ENCODE measurements at regions of chr17 and their contacts with region 1.

Region 1: DNA sequence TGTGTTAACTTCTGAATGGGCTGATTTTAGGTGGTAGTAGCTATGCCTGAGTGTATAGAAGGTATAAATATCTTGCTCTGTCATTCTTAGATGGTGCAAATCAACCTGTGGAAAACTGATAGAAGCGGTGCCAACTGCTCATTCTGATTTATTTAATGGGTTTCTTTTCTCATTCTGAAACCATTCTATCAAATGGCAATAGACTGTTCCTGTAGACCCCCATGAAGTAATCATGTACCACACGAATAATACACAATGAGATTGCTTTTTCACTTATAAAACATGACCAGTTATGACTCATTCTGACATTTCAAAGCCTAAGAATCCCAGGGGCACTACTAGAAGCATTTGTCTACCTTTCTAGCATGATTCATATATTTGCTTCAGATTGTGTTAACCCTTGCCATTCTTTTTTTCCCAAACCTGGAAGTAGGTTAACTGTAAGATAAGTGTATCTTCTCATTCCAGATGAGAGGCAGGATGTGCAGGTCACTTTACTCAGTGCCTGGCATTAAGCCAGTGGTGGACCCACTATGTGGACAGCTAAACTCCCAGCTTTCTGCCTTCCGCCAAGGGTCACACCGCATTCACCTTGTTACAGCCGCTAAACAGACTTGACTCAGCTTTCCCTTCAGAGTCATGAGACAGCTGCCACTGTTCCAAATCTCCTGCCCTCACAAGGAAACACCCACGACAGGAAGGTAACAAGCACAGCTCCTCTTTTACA is 16.4 kb upstream of the SLC16A11 start:
- DNase-seq: no peak
- ATAC-seq: no peak
- H3K4me3 ChIP-seq: no peak overlapping the region
- H3K27ac ChIP-seq: no peak overlapping the region
- H3K4me1 ChIP-seq: no peaks in the 10 kb centered on the region
- H3K27me3 ChIP-seq: no peaks in the 10 kb centered on the region
- CTCF ChIP-seq: no peak
- POLR2A ChIP-seq: no peak

Region 2: DNA sequence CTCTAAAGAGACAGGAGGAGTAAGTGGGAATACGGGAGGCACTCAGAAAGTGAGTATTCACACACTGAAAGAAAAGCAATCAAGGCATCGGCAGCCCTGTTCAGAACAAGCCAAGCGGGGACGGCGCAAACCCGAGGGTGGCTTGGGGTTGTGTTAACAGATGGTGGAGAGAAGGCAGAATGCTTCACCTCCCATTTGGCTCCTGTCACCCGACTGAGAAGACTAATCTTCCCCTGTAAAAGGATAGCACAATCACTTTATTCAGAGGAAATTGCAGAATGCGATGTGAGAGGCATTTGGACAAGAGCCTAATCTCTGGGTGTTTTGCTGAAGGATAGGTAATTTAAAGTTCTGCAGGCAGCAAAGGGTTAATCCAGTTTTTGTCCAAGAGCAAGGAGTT is 1109.5 kb before region 1 on chr17:
- intact Hi-C with region 1: no loop called
- DNase-seq: no peak
- ATAC-seq: no peak
- H3K4me3 ChIP-seq: no peak overlapping the region
- H3K27ac ChIP-seq: no peak overlapping the region
- H3K4me1 ChIP-seq: no peaks in the 10 kb centered on the region
- H3K27me3 ChIP-seq: no peaks in the 10 kb centered on the region
- CTCF ChIP-seq: no peak
- POLR2A ChIP-seq: no peak

Region 3: DNA sequence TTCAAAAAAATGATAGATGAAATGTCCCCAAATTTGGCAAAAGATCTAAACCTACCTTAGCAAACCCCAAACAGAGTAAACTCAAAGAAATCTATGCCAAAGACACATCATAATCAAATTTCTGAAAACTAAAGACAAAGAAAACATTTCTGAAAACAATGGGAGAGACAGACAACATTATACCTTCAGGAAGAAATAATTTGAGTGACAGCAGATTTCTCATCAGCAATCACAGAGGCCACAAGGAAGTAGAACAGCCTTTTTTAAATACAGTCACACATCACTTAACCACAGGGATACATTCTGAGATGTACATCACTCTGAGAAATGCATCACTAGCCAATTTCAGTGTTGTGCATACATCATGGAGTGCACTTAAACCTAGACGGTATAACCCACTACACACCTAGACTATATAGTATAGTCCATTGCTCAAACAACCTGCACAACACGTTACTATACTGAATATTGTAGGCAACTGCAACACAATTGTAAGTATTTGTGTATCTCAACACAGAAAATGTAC is 89.4 kb before region 1 on chr17:
- intact Hi-C with region 1: no loop called
- DNase-seq: no peak
- ATAC-seq: no peak
- H3K4me3 ChIP-seq: no peak overlapping the region
- H3K27ac ChIP-seq: no peak overlapping the region
- H3K4me1 ChIP-seq: no peaks in the 10 kb centered on the region
- H3K27me3 ChIP-seq: no peaks in the 10 kb centered on the region
- CTCF ChIP-seq: no peak
- POLR2A ChIP-seq: no peak

Region 4: DNA sequence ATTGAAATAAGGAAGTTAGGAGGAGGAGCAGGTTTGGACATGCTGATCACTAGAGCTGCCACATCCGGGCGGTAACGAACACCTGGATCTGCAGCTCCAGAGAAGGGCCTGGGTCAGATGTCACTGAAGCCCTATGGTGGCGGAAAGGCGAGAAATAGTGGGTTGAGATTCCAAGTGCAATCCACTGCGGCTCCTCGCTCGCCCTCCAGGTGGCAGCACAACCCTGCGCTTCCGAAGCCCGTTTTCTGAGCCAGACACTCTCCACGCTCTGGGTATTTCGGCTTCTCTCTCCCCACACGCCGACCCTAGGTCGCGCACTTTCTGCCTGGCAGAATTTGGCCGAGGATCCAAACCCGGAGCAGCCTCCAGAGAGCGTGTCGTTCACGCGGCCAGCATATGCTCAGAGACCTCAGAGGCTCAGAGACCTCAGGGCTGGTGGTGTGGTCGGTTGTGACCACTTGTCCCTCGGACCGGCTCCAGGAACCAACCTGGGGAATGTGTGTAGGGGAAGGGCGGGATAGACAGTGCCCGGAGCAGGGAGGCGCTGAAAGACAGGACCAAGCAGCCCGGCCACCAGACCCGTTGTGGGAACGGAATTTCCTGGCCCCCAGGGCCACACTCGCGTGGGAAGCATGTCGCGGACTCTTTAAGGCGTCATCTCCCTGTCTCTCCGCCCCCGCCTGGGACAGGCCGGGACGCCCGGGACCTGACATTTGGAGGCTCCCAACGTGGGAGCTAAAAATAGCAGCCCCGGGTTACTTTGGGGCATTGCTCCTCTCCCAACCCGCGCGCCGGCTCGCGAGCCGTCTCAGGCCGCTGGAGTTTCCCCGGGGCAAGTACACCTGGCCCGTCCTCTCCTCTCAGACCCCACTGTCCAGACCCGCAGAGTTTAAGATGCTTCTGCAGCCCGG is 220.4 kb after region 1 on chr17:
- intact Hi-C with region 1: loop called (anchors 10 kb)
- DNase-seq: peak; percentile 84 to 88 (median 86)
- ATAC-seq: peak; percentile 85
- H3K4me3 ChIP-seq: no peak overlapping the region
- H3K27ac ChIP-seq: peak overlapping the region; percentile 42 to 79 (median 70)
- H3K4me1 ChIP-seq: peaks cover 24% of the 10 kb centered on the region
- H3K27me3 ChIP-seq: no peaks in the 10 kb centered on the region
- CTCF ChIP-seq: peak; percentile 82 to 98 (median 97)
- POLR2A ChIP-seq: no peak

Region 5: GRCh38 chr17:7484067-7484918 is 424.0 kb after region 1 on chr17 and contains the start of gene POLR2A:
- intact Hi-C with region 1: no loop called
- DNase-seq: peak; percentile 98 to 99 (median 98)
- ATAC-seq: peak; percentile 83
- H3K4me3 ChIP-seq: peak within 1 kb of the TSS; percentile 28 to 42
- H3K27ac ChIP-seq: peak within 1 kb of the TSS; percentile 97 to 100 (median 99)
- H3K4me1 ChIP-seq: peaks cover 51% of the 10 kb centered on the region
- H3K27me3 ChIP-seq: no peaks in the 10 kb centered on the region
- CTCF ChIP-seq: peak in 2 of 7 experiments; percentile 33 to 47
- POLR2A ChIP-seq: peak; percentile 100
- total RNA-seq, gene POLR2A: 36.3 to 124 TPM